ENCODE measurements at regions of chr6 and their contacts with region 1.

Region 1: DNA sequence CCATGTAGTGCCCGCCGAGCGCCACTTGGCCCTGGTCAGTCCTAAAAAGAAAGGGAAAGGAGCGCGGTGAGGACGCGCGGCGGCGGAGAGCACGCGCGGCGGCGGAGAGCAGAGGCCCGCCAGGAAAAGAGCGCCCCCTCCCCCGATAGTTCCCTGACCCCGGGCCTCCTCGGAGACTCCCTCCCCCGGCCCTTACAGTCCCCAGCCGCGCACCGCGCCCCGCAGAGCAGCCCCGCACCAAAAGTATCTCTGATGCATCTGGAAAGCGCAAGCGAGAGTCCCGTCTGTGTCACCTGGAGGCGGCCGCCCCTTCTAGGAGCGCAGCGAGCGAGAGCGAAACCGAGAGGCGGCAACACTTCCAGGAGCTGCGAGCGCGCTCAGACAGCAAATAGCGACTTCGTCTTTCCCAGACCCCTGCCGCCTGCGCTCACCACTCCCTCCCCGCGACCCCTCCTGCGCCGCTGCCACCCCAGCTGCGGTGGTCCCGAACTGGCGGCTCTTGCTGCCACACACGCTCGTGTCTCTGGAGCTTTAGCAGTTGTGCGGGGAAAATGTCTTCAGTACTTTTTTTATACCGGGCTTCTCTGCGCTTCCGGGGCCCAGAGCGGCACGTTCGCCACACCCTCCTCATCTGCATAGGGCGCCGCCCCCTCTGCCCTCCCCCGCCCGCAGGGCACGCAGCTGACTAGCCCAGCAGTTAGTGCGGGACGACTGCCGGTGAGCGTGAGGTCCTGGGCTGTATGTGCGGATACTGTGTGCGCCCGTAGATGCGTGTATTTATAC is at the start of gene TENT5A:
- DNase-seq: peak; percentile 94 to 96
- ATAC-seq: peak; percentile 81
- total RNA-seq, gene TENT5A: 26.3 to 29.3 TPM

Region 2: DNA sequence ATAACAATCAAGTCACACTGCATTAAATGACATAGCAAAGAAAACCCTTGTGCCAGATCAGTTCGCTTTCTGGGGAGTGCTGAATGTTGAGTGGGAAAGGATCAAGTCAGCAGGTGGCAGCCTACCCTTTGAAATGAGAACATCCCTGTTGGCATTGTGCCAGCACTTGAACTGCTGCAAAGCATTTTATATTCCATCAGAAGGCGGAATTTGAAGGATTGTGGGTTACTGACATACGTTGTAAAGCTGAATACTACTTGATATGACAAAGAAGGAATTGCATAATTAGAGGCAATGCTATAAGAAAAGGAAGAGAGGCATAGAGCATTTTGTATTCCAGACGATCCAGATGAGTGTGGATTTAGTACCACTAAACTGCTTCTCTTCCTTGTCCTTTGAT is 1619.3 kb before region 1 on chr6:
- intact Hi-C with region 1: loop called in 1 of 2 experiments (anchors 10 kb)
- DNase-seq: peak; percentile 73 to 87
- ATAC-seq: peak; percentile 92

Region 3: GRCh38 chr6:80214436-80215022 is 1537.8 kb before region 1 on chr6:
- intact Hi-C with region 1: loop called in 1 of 2 experiments (anchors 5 kb)
- DNase-seq: peak in 1 of 2 donors; percentile 25
- ATAC-seq: peak; percentile 83

Region 4: GRCh38 chr6:80605165-80605989 is 1147.0 kb before region 1 on chr6:
- intact Hi-C with region 1: loop called in 1 of 2 experiments (anchors 10 kb)
- DNase-seq: no peak
- ATAC-seq: no peak

Region 5: DNA sequence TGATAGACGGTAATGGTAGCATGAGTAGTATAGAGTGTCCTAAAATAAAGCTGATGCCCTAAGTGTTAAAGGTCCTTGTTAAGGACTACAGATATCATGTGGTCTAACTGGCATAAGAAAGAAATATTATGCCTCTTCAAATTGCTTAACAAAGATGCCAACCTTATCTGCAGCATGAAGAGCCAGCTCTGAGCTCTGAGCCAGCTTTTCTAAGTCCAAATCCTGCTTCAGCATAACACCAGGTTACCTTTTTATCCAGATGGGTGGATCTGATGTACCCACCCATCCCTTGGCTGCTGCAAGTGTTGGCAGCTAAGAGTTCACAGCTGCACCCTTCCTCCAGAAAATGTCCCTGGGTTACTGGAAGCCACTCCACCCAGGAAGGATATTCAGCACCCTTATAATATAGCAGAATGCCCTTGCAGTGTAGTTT is 83.7 kb before region 1 on chr6:
- intact Hi-C with region 1: no loop called
- DNase-seq: no peak
- ATAC-seq: no peak

Region 6: GRCh38 chr6:82076916-82077315 is 324.6 kb after region 1 on chr6:
- intact Hi-C with region 1: no loop called
- DNase-seq: no peak
- ATAC-seq: peak; percentile 79

Region 7: GRCh38 chr6:82484754-82485656 is 732.7 kb after region 1 on chr6:
- intact Hi-C with region 1: no loop called
- DNase-seq: no peak
- ATAC-seq: no peak

Measured in left colon (tissue), 2 donors.